Ascending aorta (tissue), 2 donors: ENCODE measurements at regions of chr13 and their contacts with region 1.

Region 1: GRCh38 chr13:106567474-106568298 is at the start of gene ARGLU1:
- DNase-seq: peak; percentile 61 to 96
- H3K4me3 ChIP-seq: peak within 1 kb of the TSS; percentile 83 to 93
- H3K27ac ChIP-seq: peak within 1 kb of the TSS; percentile 92 to 96
- H3K4me1 ChIP-seq: peaks cover 0 to 29% of the 10 kb centered on the region in 2 donors
- H3K27me3 ChIP-seq: no peaks in the 10 kb centered on the region
- CTCF ChIP-seq: no peak
- total RNA-seq, gene ARGLU1: 79.7 TPM

Region 2: DNA sequence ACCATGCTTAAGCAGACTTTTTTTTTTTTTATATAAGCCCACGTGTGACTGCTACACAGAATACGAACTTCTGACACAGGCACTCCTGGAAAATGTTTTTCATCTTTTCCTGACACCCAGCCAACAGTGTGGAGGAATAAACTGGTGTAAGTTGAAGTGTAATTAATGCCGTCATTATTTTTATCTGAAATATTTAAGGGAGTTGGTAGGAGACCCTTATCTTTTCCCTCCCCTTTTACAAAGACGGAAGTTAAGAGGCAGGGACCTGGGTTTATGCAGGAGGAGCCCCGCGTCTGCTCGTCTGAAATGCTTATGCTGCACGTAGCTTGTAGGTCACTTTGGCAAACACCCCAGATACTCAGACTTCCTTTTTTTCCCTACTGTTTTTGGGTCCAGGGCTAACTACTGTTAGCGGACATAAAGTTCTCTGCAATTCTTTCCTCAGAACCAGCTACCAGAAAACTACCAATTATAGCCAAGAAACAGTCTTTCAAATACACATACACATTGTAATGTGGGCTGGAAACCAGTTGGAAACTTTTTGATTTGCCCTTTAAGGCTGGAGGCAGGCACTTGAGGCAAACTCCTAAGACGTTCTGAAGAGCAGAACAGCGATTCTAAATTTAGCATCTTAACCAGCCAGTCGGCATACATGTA is 83.0 kb before region 1 on chr13:
- intact Hi-C with region 1: no loop called
- DNase-seq: peak in 1 of 2 donors; percentile 80
- H3K4me3 ChIP-seq: peak overlapping the region; percentile 23 to 58
- H3K27ac ChIP-seq: peak overlapping the region; percentile 93 to 96
- H3K4me1 ChIP-seq: peaks cover 3 to 35% of the 10 kb centered on the region in 2 donors
- H3K27me3 ChIP-seq: no peaks in the 10 kb centered on the region
- CTCF ChIP-seq: no peak

Region 3: DNA sequence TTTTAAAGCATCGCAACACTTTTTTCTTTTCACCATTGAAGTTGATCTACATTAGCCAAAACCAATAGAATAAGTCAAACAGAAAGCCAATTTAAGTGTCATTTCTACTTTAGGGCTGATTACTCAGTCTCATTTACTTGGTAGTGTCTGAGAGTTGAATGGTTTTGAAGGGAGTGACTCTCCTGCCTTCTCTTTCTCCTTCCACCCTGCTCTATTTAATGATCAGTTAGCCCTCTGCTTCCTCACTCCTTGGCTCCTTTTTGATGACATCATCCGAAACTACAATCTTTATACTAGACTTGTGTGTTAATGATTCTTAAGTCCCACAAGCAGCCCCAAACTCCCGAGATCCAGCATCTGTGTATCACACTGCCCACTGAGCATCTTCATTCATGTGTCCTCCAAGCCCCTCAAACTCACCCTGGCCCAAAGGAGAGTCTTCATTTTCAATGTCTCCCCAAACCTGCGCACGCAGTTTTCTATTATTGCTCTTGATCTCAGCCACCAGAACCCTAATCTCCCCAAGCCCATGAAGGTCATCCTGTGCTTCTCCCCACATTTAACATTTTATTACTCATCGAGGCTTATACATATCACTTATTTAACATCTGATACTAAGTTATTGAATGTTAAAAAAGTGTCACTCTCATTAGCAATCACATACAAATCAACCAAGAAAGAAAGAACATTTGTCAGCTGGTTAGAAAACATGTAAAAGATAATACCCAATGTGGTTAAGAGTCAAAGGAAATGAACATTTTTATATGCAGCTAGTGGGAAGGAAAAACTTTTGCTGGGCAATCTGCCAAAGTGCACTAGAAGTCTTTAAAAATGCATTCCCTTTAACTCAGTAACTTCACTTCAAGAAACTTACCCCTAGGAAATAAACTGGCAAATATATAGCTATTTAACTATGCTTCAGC is 32.5 kb after region 1 on chr13:
- intact Hi-C with region 1: loop called (anchors 2 kb)
- DNase-seq: no peak
- H3K4me3 ChIP-seq: no peak overlapping the region
- H3K27ac ChIP-seq: no peak overlapping the region
- H3K4me1 ChIP-seq: peaks cover 2 to 22% of the 10 kb centered on the region in 2 donors
- H3K27me3 ChIP-seq: no peaks in the 10 kb centered on the region
- CTCF ChIP-seq: no peak

Region 4: DNA sequence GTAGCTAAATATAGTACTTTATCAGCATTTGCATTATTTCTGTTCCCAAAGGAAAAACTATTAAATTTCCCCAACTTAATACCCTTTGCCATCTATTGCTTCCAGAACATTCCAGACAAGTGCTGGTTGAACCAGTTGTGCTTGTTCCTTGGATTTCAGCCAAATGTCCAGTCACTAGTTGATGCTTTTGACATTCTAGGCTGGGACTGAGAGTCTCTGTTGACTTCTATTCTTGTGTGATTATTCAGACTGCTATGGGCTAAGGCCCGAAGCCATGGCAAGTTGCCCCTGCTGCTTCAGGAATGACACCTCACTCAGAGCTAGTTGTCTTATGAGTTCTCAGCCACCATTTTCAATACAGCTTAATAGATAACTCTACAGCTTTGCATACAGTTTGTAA is 458.3 kb after region 1 on chr13:
- intact Hi-C with region 1: loop called (anchors 10 kb)
- DNase-seq: peak; percentile 78 to 95
- H3K4me3 ChIP-seq: no peak overlapping the region
- H3K27ac ChIP-seq: peak overlapping the region; percentile 74 to 76
- H3K4me1 ChIP-seq: peaks cover 0 to 13% of the 10 kb centered on the region in 2 donors
- H3K27me3 ChIP-seq: no peaks in the 10 kb centered on the region
- CTCF ChIP-seq: no peak

Region 5: GRCh38 chr13:107099661-107100060 is 532.0 kb after region 1 on chr13:
- intact Hi-C with region 1: no loop called
- DNase-seq: no peak
- H3K4me3 ChIP-seq: no peak overlapping the region
- H3K27ac ChIP-seq: no peak overlapping the region
- H3K4me1 ChIP-seq: no peaks in the 10 kb centered on the region
- H3K27me3 ChIP-seq: no peaks in the 10 kb centered on the region
- CTCF ChIP-seq: no peak

Region 6: GRCh38 chr13:107124129-107124718 is 556.5 kb after region 1 on chr13:
- intact Hi-C with region 1: loop called (anchors 10 kb)
- DNase-seq: no peak
- H3K4me3 ChIP-seq: no peak overlapping the region
- H3K27ac ChIP-seq: no peak overlapping the region
- H3K4me1 ChIP-seq: no peaks in the 10 kb centered on the region
- H3K27me3 ChIP-seq: no peaks in the 10 kb centered on the region
- CTCF ChIP-seq: peak; percentile 52 to 75 (median 64)